T-cell (primary cell): ENCODE measurements at regions of chr18 and their contacts with region 1.

Region 1: GRCh38 chr18:54269893-54270844 is 852 bp downstream of the POLI start:
- DNase-seq: peak in 10 of 35 experiments; percentile 7 to 55 (median 14)
- ATAC-seq: peak; percentile 7 to 46 (median 41)
- H3K4me3 ChIP-seq: peak overlapping the region; percentile 86
- H3K4me3 Mint-ChIP-seq: peak overlapping the region; percentile 90 to 96 (median 92)
- H3K27ac ChIP-seq: peak overlapping the region; percentile 92
- H3K27ac Mint-ChIP-seq: peak overlapping the region; percentile 98
- H3K4me1 ChIP-seq: peaks cover 6 to 20% of the 10 kb centered on the region in 2 experiments
- H3K4me1 Mint-ChIP-seq: peaks cover 22 to 30% (median 23%) of the 10 kb centered on the region in 3 donors
- H3K27me3 ChIP-seq: no peaks in the 10 kb centered on the region
- H3K27me3 Mint-ChIP-seq: no peaks in the 10 kb centered on the region

Region 2: DNA sequence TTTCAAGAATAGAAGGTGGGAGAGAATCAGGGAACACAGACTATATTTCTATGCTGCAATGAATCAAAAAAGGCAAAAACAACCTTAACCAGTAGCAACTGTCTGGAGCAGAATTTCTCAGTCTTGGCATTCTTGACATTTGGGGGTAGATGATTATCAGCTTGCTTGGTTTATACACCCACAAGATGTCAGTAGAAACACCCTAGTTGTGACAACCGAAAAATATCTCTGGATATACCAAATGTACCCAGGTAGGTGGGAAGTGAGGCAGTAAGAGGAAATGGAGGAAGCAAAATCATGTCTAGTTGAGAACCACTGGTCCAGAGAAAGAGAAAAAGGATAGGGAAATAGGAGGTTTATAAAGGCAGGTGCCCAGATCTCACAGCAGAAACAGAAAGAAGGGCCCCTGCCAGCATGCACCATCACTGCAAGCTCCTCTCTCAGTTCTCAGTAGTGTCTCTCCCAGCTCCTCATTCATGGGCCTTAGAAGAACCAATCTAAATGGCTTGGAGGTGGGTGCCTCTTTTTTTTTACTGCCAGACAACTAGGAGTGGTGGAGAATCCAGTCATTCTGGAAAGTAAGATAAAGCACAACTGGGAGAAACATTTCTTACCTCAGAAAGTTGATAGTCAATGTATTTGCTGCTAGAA is 96.1 kb before region 1 on chr18:
- CTCF ChIA-PET with region 1: no interaction called
- POLR2A ChIA-PET with region 1: no interaction called
- DNase-seq: peak in 1 of 35 experiments; percentile 5
- ATAC-seq: no peak
- H3K4me3 ChIP-seq: no peak overlapping the region
- H3K4me3 Mint-ChIP-seq: no peak overlapping the region
- H3K27ac ChIP-seq: no peak overlapping the region
- H3K27ac Mint-ChIP-seq: peak overlapping the region; percentile 29
- H3K4me1 ChIP-seq: peaks cover 0 to 3% of the 10 kb centered on the region in 2 experiments
- H3K4me1 Mint-ChIP-seq: peaks cover 17 to 35% (median 29%) of the 10 kb centered on the region in 3 donors
- H3K27me3 ChIP-seq: no peaks in the 10 kb centered on the region
- H3K27me3 Mint-ChIP-seq: no peaks in the 10 kb centered on the region

Region 3: GRCh38 chr18:54191352-54191751 is 78.8 kb before region 1 on chr18:
- CTCF ChIA-PET with region 1: no interaction called
- POLR2A ChIA-PET with region 1: no interaction called
- DNase-seq: no peak
- ATAC-seq: no peak
- H3K4me3 ChIP-seq: no peak overlapping the region
- H3K4me3 Mint-ChIP-seq: no peak overlapping the region
- H3K27ac ChIP-seq: no peak overlapping the region
- H3K27ac Mint-ChIP-seq: no peak overlapping the region
- H3K4me1 ChIP-seq: no peaks in the 10 kb centered on the region
- H3K4me1 Mint-ChIP-seq: peaks cover 2 to 8% (median 6%) of the 10 kb centered on the region in 3 donors
- H3K27me3 ChIP-seq: no peaks in the 10 kb centered on the region
- H3K27me3 Mint-ChIP-seq: no peaks in the 10 kb centered on the region

Region 4: DNA sequence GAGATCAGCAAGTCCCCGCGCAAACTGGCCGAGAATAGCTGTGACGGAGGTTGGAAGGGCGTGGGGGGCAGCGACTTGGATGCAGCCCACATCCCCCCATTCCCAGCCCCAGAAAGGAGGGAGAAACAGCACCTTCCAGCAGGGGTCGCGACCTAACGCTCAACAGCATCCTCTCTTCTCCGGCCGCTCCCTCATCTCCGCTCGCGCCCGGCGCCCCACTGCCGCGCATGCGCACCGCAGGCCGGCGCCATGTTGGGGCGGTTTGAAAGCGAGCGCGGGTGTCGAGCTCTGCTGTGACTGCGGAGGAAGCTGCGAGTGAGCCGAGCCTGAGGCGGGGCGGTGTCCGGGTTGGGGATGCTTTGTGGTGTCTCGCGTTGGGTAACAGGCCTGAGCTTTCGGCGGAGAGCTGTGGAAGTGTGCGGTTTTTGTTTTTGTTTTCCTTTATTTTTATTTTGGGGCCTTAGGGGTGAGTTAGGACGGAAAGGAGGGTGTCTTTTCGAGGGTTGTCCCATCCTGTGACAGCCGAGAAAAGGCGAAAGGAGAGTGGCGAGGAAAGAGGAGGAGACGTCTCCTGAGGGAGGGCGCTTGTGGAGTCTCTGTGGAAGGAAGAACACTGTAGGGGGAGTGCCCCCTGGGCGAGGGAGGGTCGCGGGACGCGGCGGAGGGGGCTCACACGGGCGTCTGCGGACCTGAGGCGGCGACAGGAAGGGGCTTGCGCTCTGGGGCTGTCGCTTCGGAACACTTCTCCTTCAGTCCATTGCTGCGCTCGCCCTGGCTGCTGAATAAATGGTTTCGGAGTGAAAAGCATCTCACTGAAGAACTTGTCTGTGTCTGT is 87.7 kb after region 1 on chr18 and contains the starts of genes C18orf54 and STARD6:
- CTCF ChIA-PET with region 1: interaction called in 1 of 2 experiments, 15 read pairs
- POLR2A ChIA-PET with region 1: interaction called in 1 of 2 experiments, 3 read pairs
- DNase-seq: peak; percentile 78 to 97 (median 86)
- ATAC-seq: peak; percentile 96 to 97 (median 96)
- H3K4me3 ChIP-seq: peak within 1 kb of the TSS; percentile 89 to 93
- H3K4me3 Mint-ChIP-seq: peak within 1 kb of the TSS; percentile 94 to 99 (median 95)
- H3K27ac ChIP-seq: peak within 1 kb of the TSS; percentile 70
- H3K27ac Mint-ChIP-seq: peak within 1 kb of the TSS; percentile 90 to 94
- H3K4me1 ChIP-seq: peaks cover 0 to 8% of the 10 kb centered on the region in 2 experiments
- H3K4me1 Mint-ChIP-seq: peaks cover 14 to 22% (median 20%) of the 10 kb centered on the region in 3 donors
- H3K27me3 ChIP-seq: peaks cover 0 to 4% of the 10 kb centered on the region in 2 experiments
- H3K27me3 Mint-ChIP-seq: peaks cover 0 to 4% of the 10 kb centered on the region in 2 donors
- total RNA-seq, gene C18orf54: 1.3 to 3.4 (median 2.7) TPM
- total RNA-seq, gene STARD6: not detected